Endothelial cell of umbilical vein (primary cell): ENCODE measurements at regions of chr4 and their contacts with region 1.

Region 1: DNA sequence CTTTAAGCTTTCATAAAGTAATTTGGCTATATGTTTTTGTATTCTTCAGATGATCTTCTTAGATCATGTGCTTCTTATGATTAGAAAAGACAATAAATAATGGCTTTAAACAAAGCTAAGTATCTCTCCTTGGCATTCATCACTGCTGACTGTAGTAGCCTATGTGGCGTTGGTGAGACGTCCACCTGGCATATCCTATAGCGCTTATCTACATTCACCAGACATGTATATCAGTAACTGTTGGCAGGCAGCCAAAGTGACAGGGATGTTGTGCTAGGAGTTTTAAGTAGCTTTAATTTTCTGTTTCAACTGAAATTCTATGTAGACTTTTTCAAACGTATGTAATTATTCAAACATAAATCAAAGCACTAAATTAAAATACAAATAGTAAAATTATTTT is 276.4 kb downstream of the IL15 start:
- DNase-seq: peak; percentile 97
- H3K4me3 ChIP-seq: no peak overlapping the region
- H3K27ac ChIP-seq: peak overlapping the region; percentile 44
- H3K4me1 ChIP-seq: peaks cover 11% of the 10 kb centered on the region
- H3K27me3 ChIP-seq: no peaks in the 10 kb centered on the region
- CTCF ChIP-seq: no peak
- POLR2A ChIP-seq: no peak

Region 2: GRCh38 chr4:141833209-141833608 is 79.6 kb before region 1 on chr4:
- CTCF ChIA-PET with region 1: no interaction called
- POLR2A ChIA-PET with region 1: no interaction called
- dilution Hi-C with region 1: no loop called
- intact Hi-C with region 1: no loop called
- DNase-seq: no peak
- H3K4me3 ChIP-seq: no peak overlapping the region
- H3K27ac ChIP-seq: no peak overlapping the region
- H3K4me1 ChIP-seq: no peaks in the 10 kb centered on the region
- H3K27me3 ChIP-seq: no peaks in the 10 kb centered on the region
- CTCF ChIP-seq: no peak
- POLR2A ChIP-seq: no peak

Region 3: GRCh38 chr4:141890279-141890678 is 22.6 kb before region 1 on chr4:
- CTCF ChIA-PET with region 1: interaction called, 10 read pairs
- POLR2A ChIA-PET with region 1: no interaction called
- dilution Hi-C with region 1: no loop called
- intact Hi-C with region 1: no loop called
- DNase-seq: peak; percentile 94
- H3K4me3 ChIP-seq: no peak overlapping the region
- H3K27ac ChIP-seq: no peak overlapping the region
- H3K4me1 ChIP-seq: peaks cover 13% of the 10 kb centered on the region
- H3K27me3 ChIP-seq: no peaks in the 10 kb centered on the region
- CTCF ChIP-seq: no peak
- POLR2A ChIP-seq: no peak